MCF 10A (cell line): ENCODE measurements at regions of chr6 and their contacts with region 1.

Region 1: GRCh38 chr6:109002051-109002697 is 92.5 kb downstream of the SESN1 start:
- DNase-seq: peak; percentile 88
- H3K4me3 Mint-ChIP-seq: peak overlapping the region; percentile 62
- H3K27ac Mint-ChIP-seq: peak overlapping the region; percentile 77
- H3K4me1 Mint-ChIP-seq: peaks cover 34% of the 10 kb centered on the region
- H3K27me3 Mint-ChIP-seq: no peaks in the 10 kb centered on the region
- CTCF ChIP-seq: no peak

Region 2: DNA sequence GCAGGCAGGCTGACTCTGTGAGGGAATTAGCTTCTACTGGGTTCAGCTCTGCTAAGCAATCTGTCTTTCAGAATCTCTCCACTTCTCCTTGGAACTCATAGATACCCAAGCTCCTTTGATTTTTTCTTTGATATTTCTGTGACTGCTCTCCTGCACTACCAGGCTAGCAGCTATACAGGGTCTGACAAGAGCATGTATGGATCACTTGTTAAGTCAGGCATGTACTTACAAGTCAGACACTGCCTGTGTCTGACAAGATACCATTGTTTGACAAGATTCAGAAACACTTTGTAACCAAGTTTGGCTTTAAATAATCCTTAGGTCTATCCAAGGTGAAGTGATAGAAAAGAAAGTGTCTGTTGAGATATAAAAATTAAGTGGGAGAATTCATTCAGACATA is 13.0 kb after region 1 on chr6:
- CTCF ChIA-PET with region 1: no interaction called
- POLR2A ChIA-PET with region 1: interaction called, 46 read pairs
- intact Hi-C with region 1: no loop called
- DNase-seq: no peak
- H3K4me3 Mint-ChIP-seq: no peak overlapping the region
- H3K27ac Mint-ChIP-seq: peak overlapping the region; percentile 66
- H3K4me1 Mint-ChIP-seq: peaks cover 16% of the 10 kb centered on the region
- H3K27me3 Mint-ChIP-seq: no peaks in the 10 kb centered on the region
- CTCF ChIP-seq: no peak